ENCODE measurements at regions of chr3 and their contacts with region 1.

Region 1: GRCh38 chr3:130111185-130111864 is 29.7 kb downstream of the ALG1L2 start:
- DNase-seq: peak; percentile 100
- H3K4me3 Mint-ChIP-seq: peak overlapping the region; percentile 97
- H3K27ac Mint-ChIP-seq: peak overlapping the region; percentile 99
- H3K4me1 Mint-ChIP-seq: peaks cover 13% of the 10 kb centered on the region
- H3K27me3 Mint-ChIP-seq: peaks cover 2% of the 10 kb centered on the region

Region 2: GRCh38 chr3:128965704-128966217 is 1145.6 kb before region 1 on chr3:
- intact Hi-C with region 1: no loop called
- DNase-seq: no peak
- H3K4me3 Mint-ChIP-seq: no peak overlapping the region
- H3K27ac Mint-ChIP-seq: no peak overlapping the region
- H3K4me1 Mint-ChIP-seq: peaks cover 5% of the 10 kb centered on the region
- H3K27me3 Mint-ChIP-seq: peaks cover 8% of the 10 kb centered on the region

Region 3: DNA sequence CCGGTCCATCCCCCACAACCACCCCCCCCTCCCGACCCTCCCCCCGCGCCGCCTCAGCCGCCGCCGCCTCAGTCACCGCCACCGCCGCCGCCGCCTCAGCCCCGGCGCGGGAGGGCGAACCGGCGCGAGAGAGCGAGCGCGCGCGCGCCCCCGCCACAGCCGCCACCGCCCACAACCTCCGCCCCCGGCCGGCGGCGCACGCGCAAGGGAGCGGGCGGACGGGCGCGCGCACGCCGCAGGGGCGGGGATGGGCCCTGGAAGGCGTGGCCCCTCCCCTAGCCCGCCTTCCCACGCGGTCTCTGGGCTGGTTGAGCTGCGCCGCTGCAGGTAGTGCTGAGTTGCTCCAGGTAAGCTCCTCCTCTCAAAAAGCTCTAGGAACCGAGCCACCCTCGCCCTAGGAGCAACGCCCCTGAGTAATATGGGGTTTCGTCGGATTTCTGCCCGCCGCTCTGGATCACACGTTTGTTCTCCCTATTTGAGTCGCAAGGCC is 217.7 kb before region 1 on chr3 and contains the start of gene TMCC1:
- intact Hi-C with region 1: loop called (anchors 2 kb)
- DNase-seq: peak; percentile 97
- H3K4me3 Mint-ChIP-seq: peak within 1 kb of the TSS; percentile 92
- H3K27ac Mint-ChIP-seq: peak within 1 kb of the TSS; percentile 90
- H3K4me1 Mint-ChIP-seq: peaks cover 36% of the 10 kb centered on the region
- H3K27me3 Mint-ChIP-seq: no peaks in the 10 kb centered on the region
- total RNA-seq, gene TMCC1: 19.2 and 21.0 TPM in 2 replicates

Region 4: DNA sequence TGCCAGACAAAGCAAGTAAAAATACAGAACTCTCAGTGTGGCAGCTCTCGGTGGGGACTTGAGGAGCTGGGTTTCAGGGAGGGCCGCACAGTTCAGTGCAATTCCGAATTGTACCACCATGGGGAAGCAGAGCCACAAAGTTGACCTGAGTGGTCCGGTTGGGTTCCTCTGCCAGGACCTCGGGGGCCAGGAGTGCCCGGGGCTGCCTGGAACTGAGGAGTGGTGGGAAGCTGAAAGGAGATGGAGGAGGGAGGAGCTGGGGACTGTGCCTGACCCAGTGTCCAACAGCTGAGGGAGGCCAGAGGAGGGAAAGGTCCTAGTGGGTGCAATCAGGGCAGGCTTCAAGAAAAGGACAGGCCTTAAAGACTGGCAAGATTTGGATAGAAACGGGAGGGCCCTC is 169.0 kb before region 1 on chr3:
- intact Hi-C with region 1: loop called (anchors 10 kb)
- DNase-seq: peak; percentile 78
- H3K4me3 Mint-ChIP-seq: no peak overlapping the region
- H3K27ac Mint-ChIP-seq: no peak overlapping the region
- H3K4me1 Mint-ChIP-seq: peaks cover 2% of the 10 kb centered on the region
- H3K27me3 Mint-ChIP-seq: peaks cover 3% of the 10 kb centered on the region

Region 5: GRCh38 chr3:130260918-130261317 is 149.6 kb after region 1 on chr3:
- intact Hi-C with region 1: no loop called
- DNase-seq: no peak
- H3K4me3 Mint-ChIP-seq: no peak overlapping the region
- H3K27ac Mint-ChIP-seq: no peak overlapping the region
- H3K4me1 Mint-ChIP-seq: no peaks in the 10 kb centered on the region
- H3K27me3 Mint-ChIP-seq: peaks cover 4% of the 10 kb centered on the region

Measured in activated CD4-positive, alpha-beta T cell treated with anti-CD3 and anti-CD28 coated beads, Interleukin-2, amount 10 ng/mL, durations not matched to agents 24 days and 14 days (primary cell).